ENCODE measurements at regions of chr13 and their contacts with region 1.

Region 1: GRCh38 chr13:99606324-99607066 is 105.2 kb downstream of the TM9SF2 start:
- DNase-seq: peak; percentile 81
- H3K4me3 ChIP-seq: peak within 1 kb of the TSS; percentile 75
- H3K27ac ChIP-seq: peak within 1 kb of the TSS; percentile 78
- H3K4me1 ChIP-seq: peaks cover 21% of the 10 kb centered on the region
- CTCF ChIP-seq: no peak

Region 2: GRCh38 chr13:99442273-99442895 is 164.1 kb before region 1 on chr13:
- CTCF ChIA-PET with region 1: no interaction called
- POLR2A ChIA-PET with region 1: no interaction called
- intact Hi-C with region 1: loop called (anchors 5 kb)
- DNase-seq: peak; percentile 48
- H3K4me3 ChIP-seq: no peak overlapping the region
- H3K27ac ChIP-seq: no peak overlapping the region
- H3K4me1 ChIP-seq: no peaks in the 10 kb centered on the region
- CTCF ChIP-seq: peak; percentile 78

Region 3: DNA sequence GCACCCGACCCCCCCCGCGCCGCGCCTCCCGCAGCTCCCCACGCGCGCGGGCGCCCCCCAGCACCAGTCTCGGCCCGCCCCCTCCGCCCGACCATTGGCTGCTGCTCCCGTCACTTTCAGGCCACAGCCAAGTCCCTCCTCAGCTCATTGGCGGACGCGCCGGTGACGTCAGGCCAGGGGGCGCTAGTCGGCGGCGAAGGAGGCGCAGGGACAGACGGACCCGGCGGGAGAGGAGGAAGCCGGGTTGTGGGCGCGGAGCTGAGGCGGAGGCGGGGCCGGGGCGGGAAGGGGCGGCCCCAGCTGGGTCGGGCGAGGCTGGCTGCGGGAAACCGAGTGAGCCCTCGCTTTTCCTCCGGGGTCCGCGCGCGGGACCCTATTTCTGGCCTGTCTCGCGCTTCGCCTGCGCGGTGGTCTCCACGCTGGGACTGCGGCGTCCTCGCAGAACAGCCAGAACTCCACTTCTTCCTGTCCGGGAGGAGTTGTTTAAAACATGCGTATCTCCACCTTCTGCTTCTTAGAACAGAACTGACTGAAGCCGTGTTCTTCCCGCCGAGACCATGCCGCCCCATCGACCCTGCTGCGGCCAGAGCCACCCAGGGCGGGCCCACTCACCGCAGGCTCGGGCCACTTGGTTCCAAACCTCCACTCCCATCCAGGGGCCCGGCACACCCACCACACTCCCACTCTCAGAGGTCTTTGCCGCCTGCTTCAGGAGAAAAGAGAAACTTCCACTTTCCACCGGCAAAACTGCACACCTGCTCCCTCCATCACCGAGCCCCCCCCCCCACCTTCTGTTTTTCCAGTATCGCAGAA is 1068.6 kb after region 1 on chr13:
- CTCF ChIA-PET with region 1: no interaction called
- POLR2A ChIA-PET with region 1: no interaction called
- intact Hi-C with region 1: loop called (anchors 10 kb)
- DNase-seq: peak; percentile 89
- H3K4me3 ChIP-seq: peak overlapping the region; percentile 75
- H3K27ac ChIP-seq: no peak overlapping the region
- H3K4me1 ChIP-seq: no peaks in the 10 kb centered on the region
- CTCF ChIP-seq: peak; percentile 30; the same call in 1 of the 2 replicates

Measured in OCI-LY7 (cell line).